ENCODE measurements at regions of chr18 and their contacts with region 1.

Region 1: GRCh38 chr18:51668101-51668500 is 470.6 kb upstream of the MEX3C start:
- DNase-seq: peak in 2 of 3 donors; percentile 48 to 54
- ATAC-seq: peak; percentile 75 to 83 (median 79)
- H3K4me3 ChIP-seq: no peak overlapping the region
- H3K27ac ChIP-seq: no peak overlapping the region
- H3K4me1 ChIP-seq: no peaks in the 10 kb centered on the region
- H3K27me3 ChIP-seq: no peaks in the 10 kb centered on the region
- CTCF ChIP-seq: peak; percentile 73 to 87 (median 78)
- POLR2A ChIP-seq: no peak

Region 2: DNA sequence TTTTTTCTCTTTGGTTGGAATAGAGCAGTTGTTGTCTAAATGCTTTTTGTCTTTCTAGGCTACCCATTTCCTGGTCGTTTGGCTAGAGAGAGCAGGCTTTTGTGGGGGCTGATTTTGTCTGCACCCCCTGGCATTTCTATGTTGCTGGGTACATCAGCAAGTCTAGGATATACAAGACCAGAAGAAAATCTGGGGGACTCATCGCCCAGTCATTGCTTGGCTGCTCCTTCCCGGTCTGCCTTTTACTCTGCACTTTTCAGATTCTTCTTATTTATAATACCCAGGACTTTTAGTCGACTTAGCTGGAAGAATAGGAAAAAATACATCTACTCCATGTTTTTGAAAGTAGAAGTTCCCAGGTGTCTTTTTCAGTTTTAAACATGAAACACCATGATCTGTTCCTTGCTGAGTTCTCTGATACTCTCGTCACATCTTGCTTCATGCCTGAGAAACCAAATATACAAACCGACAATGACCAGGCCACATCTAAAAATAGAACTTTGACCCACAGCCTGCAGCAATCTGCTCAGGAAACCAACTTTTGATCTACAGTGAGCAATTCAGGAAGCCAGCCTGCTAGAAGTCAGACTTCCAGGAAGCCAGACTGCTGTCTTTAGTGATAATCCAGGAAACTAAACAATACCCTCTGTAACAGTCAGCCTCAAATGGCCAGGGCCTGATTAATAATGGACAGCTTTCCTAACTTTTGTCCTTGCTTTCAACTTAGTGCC is 306.8 kb before region 1 on chr18:
- intact Hi-C with region 1: no loop called
- DNase-seq: no peak
- ATAC-seq: peak; percentile 78 to 98 (median 94)
- H3K4me3 ChIP-seq: no peak overlapping the region
- H3K27ac ChIP-seq: no peak overlapping the region
- H3K4me1 ChIP-seq: peaks cover 0 to 8% (median 0%) of the 10 kb centered on the region in 4 donors
- H3K27me3 ChIP-seq: no peaks in the 10 kb centered on the region
- CTCF ChIP-seq: no peak
- POLR2A ChIP-seq: no peak

Region 3: GRCh38 chr18:51711298-51711889 is 43.3 kb after region 1 on chr18:
- intact Hi-C with region 1: no loop called
- DNase-seq: no peak
- ATAC-seq: no peak
- H3K4me3 ChIP-seq: no peak overlapping the region
- H3K27ac ChIP-seq: no peak overlapping the region
- H3K4me1 ChIP-seq: no peaks in the 10 kb centered on the region
- H3K27me3 ChIP-seq: no peaks in the 10 kb centered on the region
- CTCF ChIP-seq: no peak
- POLR2A ChIP-seq: no peak

Region 4: GRCh38 chr18:51721996-51722395 is 53.9 kb after region 1 on chr18:
- intact Hi-C with region 1: no loop called
- DNase-seq: no peak
- ATAC-seq: no peak
- H3K4me3 ChIP-seq: no peak overlapping the region
- H3K27ac ChIP-seq: no peak overlapping the region
- H3K4me1 ChIP-seq: no peaks in the 10 kb centered on the region
- H3K27me3 ChIP-seq: no peaks in the 10 kb centered on the region
- CTCF ChIP-seq: no peak
- POLR2A ChIP-seq: no peak

Region 5: DNA sequence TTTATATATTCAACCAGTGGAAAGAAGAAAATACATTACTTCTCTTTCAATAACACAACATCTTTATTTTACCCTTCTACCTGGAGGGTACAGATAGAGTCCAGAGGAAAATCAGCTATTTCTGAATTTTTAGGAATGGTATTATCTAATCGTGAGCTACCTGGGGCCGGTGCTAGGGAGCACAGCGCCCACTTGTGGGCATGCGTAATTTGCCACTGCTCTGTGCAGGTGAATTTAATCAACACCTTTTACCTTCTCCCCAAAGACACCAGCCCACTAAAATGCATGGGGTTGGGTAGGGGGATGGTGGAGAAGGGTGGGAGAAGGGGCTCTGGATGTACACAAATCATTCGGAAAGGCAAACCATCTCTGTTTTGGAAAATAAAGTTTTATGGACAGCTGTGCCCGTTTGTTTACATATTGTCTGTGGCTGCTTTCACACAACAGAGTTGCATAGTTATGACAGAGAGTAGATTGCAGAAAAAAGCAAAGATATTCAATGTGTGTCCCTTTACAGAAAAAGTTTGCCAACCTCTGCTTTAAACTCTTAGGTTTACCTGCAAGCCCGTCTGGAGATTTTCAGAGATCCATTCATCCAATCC is 620.4 kb after region 1 on chr18:
- intact Hi-C with region 1: loop called in 1 of 2 experiments (anchors 10 kb)
- DNase-seq: peak; percentile 43 to 52 (median 51)
- ATAC-seq: peak; percentile 74 to 86 (median 76)
- H3K4me3 ChIP-seq: no peak overlapping the region
- H3K27ac ChIP-seq: no peak overlapping the region
- H3K4me1 ChIP-seq: peaks cover 0 to 6% (median 0%) of the 10 kb centered on the region in 4 donors
- H3K27me3 ChIP-seq: no peaks in the 10 kb centered on the region
- CTCF ChIP-seq: peak; percentile 60 to 78 (median 66)
- POLR2A ChIP-seq: no peak